Dorsolateral prefrontal cortex (tissue), 120 donors: ENCODE measurements at regions of chr10 and their contacts with region 1.

Region 1: GRCh38 chr10:7525314-7526016 is 114.6 kb upstream of the SFMBT2 start:
- DNase-seq: peak in 5 of 10 donors; percentile 42 to 74 (median 58)
- H3K4me3 ChIP-seq: peak overlapping the region in 7 of 59 donors; percentile 1 to 31 (median 20)
- H3K27ac ChIP-seq: no peak overlapping the region
- H3K27me3 ChIP-seq: peaks cover 0 to 19% (median 3%) of the 10 kb centered on the region in 45 donors
- CTCF ChIP-seq: peak; percentile 62 to 100 (median 96)

Region 2: GRCh38 chr10:7435674-7436073 is 89.8 kb before region 1 on chr10:
- intact Hi-C with region 1: no loop called
- DNase-seq: no peak
- H3K4me3 ChIP-seq: no peak overlapping the region
- H3K27ac ChIP-seq: peak overlapping the region in 1 of 59 donors; percentile 11
- H3K27me3 ChIP-seq: peaks cover 0 to 40% (median 2%) of the 10 kb centered on the region in 45 donors
- CTCF ChIP-seq: no peak

Region 3: GRCh38 chr10:7583626-7584025 is 58.2 kb after region 1 on chr10:
- intact Hi-C with region 1: no loop called
- DNase-seq: peak in 1 of 10 donors; percentile 87
- H3K4me3 ChIP-seq: no peak overlapping the region
- H3K27ac ChIP-seq: peak overlapping the region in 1 of 59 donors; percentile 25
- H3K27me3 ChIP-seq: no peaks in the 10 kb centered on the region
- CTCF ChIP-seq: no peak

Region 4: GRCh38 chr10:7622969-7623368 is 97.5 kb after region 1 on chr10:
- intact Hi-C with region 1: loop called in 1 of 2 experiments (anchors 2 kb)
- DNase-seq: no peak
- H3K4me3 ChIP-seq: no peak overlapping the region
- H3K27ac ChIP-seq: no peak overlapping the region
- H3K27me3 ChIP-seq: no peaks in the 10 kb centered on the region
- CTCF ChIP-seq: peak in 47 of 56 donors; percentile 14 to 62 (median 35)

Region 5: DNA sequence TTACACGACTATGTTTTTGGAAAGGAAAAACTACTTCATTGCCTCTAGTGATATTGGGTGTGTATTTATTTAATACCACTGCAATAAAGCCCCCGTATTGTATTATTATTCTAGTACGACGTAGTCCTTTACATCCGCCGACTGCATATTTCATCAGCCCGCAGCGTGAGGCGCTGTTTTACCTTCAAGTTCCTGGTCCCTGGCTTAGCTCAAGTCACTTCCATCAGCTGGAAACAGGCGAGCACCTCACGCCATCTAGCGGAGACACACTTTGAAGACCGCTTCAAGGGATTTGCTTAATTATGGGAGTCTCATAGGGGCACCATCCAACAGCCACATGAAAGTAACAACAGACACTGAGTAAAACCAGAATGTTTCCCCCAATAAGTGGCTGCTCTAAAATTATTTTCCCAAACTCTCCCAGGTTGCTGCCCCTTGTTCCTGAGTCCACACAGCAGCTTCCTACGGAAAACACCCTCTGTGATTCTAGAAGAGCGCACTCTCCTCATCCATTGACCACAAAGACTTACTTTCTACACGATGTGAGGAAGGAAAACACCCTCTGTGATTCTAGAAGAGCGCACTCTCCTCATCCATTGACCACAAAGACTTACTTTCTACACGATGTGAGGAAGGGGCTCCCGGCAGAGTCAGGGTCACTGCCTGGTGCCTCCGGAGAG is 161.9 kb after region 1 on chr10:
- intact Hi-C with region 1: loop called (anchors 1 to 2 kb)
- DNase-seq: peak; percentile 65 to 91 (median 80)
- H3K4me3 ChIP-seq: no peak overlapping the region
- H3K27ac ChIP-seq: no peak overlapping the region
- H3K27me3 ChIP-seq: no peaks in the 10 kb centered on the region
- CTCF ChIP-seq: peak; percentile 78 to 99 (median 96)

Region 6: GRCh38 chr10:7818295-7819122 is 293.0 kb after region 1 on chr10 and contains the start of gene TAF3:
- intact Hi-C with region 1: loop called in 1 of 2 experiments (anchors 5 kb)
- DNase-seq: peak; percentile 82 to 95 (median 90)
- H3K4me3 ChIP-seq: peak within 1 kb of the TSS; percentile 72 to 100 (median 98)
- H3K27ac ChIP-seq: peak within 1 kb of the TSS in 55 of 59 donors; percentile 1 to 92 (median 69)
- H3K27me3 ChIP-seq: no peaks in the 10 kb centered on the region
- CTCF ChIP-seq: peak in 38 of 56 donors; percentile 4 to 58 (median 34)
- total RNA-seq, gene TAF3: 9.9 to 18.7 (median 13.5) TPM

Region 7: DNA sequence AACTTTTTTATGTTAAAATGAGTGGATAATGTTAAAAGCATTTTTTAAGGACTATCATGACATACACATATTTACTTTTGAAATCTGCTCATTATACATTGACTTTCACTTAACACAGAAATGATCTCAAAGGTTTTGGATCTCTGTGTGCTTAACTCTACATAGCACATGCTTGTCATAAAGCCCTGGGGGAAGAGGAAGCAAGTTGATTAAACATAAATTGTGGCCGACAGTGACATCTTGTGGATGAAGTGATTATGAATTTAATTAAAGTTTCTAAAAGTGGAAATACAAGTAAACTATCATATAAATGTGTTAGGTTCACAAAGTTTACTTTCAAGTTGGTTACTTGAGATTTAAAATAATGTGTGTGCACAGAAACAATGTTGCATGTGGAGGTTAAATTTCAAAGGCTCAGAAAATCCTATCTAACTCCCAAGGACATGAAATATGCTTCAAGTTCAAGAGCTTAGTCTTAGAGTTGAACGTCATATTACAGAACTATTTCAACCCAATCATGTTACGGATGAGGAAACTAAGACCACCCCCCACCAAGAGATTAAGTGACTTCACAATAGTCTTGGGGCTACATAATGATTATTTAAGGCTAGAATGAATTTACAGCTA is 1776.8 kb after region 1 on chr10:
- intact Hi-C with region 1: loop called (anchors 5 to 10 kb)
- DNase-seq: peak in 1 of 10 donors; percentile 9
- H3K4me3 ChIP-seq: no peak overlapping the region
- H3K27ac ChIP-seq: no peak overlapping the region
- H3K27me3 ChIP-seq: peaks cover 0 to 11% (median 0%) of the 10 kb centered on the region in 45 donors
- CTCF ChIP-seq: peak; percentile 40 to 87 (median 69)